ENCODE measurements at regions of chr4 and their contacts with region 1.

Region 1: GRCh38 chr4:44760142-44760898 is 34.0 kb upstream of the GNPDA2 start:
- DNase-seq: no peak
- ATAC-seq: peak; percentile 28
- H3K4me3 Mint-ChIP-seq: no peak overlapping the region
- H3K27ac Mint-ChIP-seq: no peak overlapping the region
- H3K4me1 Mint-ChIP-seq: no peaks in the 10 kb centered on the region
- H3K27me3 Mint-ChIP-seq: peaks cover 19% of the 10 kb centered on the region
- CTCF ChIP-seq: peak; percentile 30

Region 2: GRCh38 chr4:45855887-45856286 is 1095.6 kb after region 1 on chr4:
- CTCF ChIA-PET with region 1: no interaction called
- POLR2A ChIA-PET with region 1: no interaction called
- intact Hi-C with region 1: no loop called
- DNase-seq: no peak
- ATAC-seq: no peak
- H3K4me3 Mint-ChIP-seq: no peak overlapping the region
- H3K27ac Mint-ChIP-seq: no peak overlapping the region
- H3K4me1 Mint-ChIP-seq: no peaks in the 10 kb centered on the region
- H3K27me3 Mint-ChIP-seq: no peaks in the 10 kb centered on the region
- CTCF ChIP-seq: no peak

Region 3: GRCh38 chr4:46270986-46271596 is 1510.8 kb after region 1 on chr4:
- CTCF ChIA-PET with region 1: no interaction called
- POLR2A ChIA-PET with region 1: no interaction called
- intact Hi-C with region 1: loop called (anchors 5 kb)
- DNase-seq: no peak
- ATAC-seq: no peak
- H3K4me3 Mint-ChIP-seq: no peak overlapping the region
- H3K27ac Mint-ChIP-seq: no peak overlapping the region
- H3K4me1 Mint-ChIP-seq: no peaks in the 10 kb centered on the region
- H3K27me3 Mint-ChIP-seq: no peaks in the 10 kb centered on the region
- CTCF ChIP-seq: no peak